Activated CD8-positive, alpha-beta T cell treated with anti-CD3 and anti-CD28 coated beads, Interleukin-2, amount 10 ng/mL, durations not matched to agents 7 days and 5 days (primary cell): ENCODE measurements at regions of chr6 and their contacts with region 1.

Region 1: DNA sequence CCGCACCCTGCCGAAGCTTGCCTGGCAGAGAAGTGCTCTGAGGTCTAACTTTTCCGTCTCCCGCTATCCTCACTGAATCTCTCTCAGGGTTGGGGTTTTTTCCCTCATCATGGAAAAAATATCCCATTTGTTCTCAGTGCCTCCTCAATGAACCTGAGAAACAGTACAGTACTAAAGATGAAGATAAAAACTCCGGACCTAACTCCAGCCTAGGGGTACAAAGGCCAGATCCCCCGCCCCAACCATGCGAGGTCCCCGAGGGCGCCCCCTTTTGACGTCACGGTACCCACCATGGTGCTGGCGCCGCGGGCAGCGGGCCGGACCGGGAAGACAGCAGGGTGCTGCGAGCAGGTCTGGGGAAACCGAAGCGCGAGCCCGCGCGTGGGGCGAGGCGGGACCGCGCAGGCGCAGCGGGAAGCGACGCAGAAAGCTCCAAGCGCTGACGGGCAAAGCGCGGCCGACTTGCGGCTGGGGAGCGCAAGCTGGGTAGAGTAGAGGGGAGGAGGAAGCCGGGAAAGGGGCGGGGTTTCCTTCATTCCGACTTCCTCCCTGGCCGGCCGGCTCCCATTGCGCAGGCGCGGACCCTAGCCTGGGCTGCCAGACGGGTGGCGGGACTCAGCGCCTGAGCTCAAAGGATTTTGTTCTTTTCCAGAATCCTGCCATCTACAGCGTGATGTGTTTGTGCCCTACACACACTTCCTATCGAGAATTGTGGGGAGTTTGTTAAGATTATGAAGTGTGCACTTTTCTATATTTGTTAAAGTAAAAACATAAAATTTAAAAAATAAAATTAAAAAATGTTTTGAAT is at the start of gene LSM2:
- DNase-seq: peak; percentile 98
- ATAC-seq: peak; percentile 98
- H3K4me3 Mint-ChIP-seq: peak within 1 kb of the TSS; percentile 97
- H3K27ac Mint-ChIP-seq: peak within 1 kb of the TSS; percentile 91
- H3K4me1 Mint-ChIP-seq: peaks cover 33% of the 10 kb centered on the region
- H3K27me3 Mint-ChIP-seq: no peaks in the 10 kb centered on the region
- total RNA-seq, gene LSM2: 123 to 128 TPM

Region 2: GRCh38 chr6:31729515-31729978 is 77.1 kb before region 1 on chr6:
- CTCF ChIA-PET with region 1: interaction called, 10 read pairs
- POLR2A ChIA-PET with region 1: interaction called, 4 read pairs
- DNase-seq: peak; percentile 88
- ATAC-seq: peak; percentile 67
- H3K4me3 Mint-ChIP-seq: peak overlapping the region; percentile 95
- H3K27ac Mint-ChIP-seq: peak overlapping the region; percentile 90
- H3K4me1 Mint-ChIP-seq: peaks cover 81% of the 10 kb centered on the region
- H3K27me3 Mint-ChIP-seq: no peaks in the 10 kb centered on the region

Region 3: GRCh38 chr6:32327103-32327502 is 520.4 kb after region 1 on chr6:
- CTCF ChIA-PET with region 1: no interaction called
- POLR2A ChIA-PET with region 1: no interaction called
- DNase-seq: no peak
- ATAC-seq: no peak
- H3K4me3 Mint-ChIP-seq: no peak overlapping the region
- H3K27ac Mint-ChIP-seq: no peak overlapping the region
- H3K4me1 Mint-ChIP-seq: peaks cover 9% of the 10 kb centered on the region
- H3K27me3 Mint-ChIP-seq: peaks cover 23% of the 10 kb centered on the region